Activated naive CD4-positive, alpha-beta T cell treated with anti-CD3 and anti-CD28 coated beads, Interleukin-2, amount 10 ng/mL, durations not matched to agents 7 days and 5 days (primary cell): ENCODE measurements at regions of chr7 and their contacts with region 1.

Region 1: GRCh38 chr7:93231799-93232672 is at the start of gene VPS50:
- DNase-seq: peak; percentile 95
- H3K4me3 Mint-ChIP-seq: peak within 1 kb of the TSS; percentile 95
- H3K27ac Mint-ChIP-seq: peak within 1 kb of the TSS; percentile 96
- H3K4me1 Mint-ChIP-seq: peaks cover 23% of the 10 kb centered on the region
- H3K27me3 Mint-ChIP-seq: no peaks in the 10 kb centered on the region

Region 2: GRCh38 chr7:93092757-93093370 is 139.2 kb before region 1 on chr7:
- CTCF ChIA-PET with region 1: interaction called, 20 read pairs
- DNase-seq: peak; percentile 26
- H3K4me3 Mint-ChIP-seq: no peak overlapping the region
- H3K27ac Mint-ChIP-seq: no peak overlapping the region
- H3K4me1 Mint-ChIP-seq: no peaks in the 10 kb centered on the region
- H3K27me3 Mint-ChIP-seq: peaks cover 11% of the 10 kb centered on the region

Region 3: DNA sequence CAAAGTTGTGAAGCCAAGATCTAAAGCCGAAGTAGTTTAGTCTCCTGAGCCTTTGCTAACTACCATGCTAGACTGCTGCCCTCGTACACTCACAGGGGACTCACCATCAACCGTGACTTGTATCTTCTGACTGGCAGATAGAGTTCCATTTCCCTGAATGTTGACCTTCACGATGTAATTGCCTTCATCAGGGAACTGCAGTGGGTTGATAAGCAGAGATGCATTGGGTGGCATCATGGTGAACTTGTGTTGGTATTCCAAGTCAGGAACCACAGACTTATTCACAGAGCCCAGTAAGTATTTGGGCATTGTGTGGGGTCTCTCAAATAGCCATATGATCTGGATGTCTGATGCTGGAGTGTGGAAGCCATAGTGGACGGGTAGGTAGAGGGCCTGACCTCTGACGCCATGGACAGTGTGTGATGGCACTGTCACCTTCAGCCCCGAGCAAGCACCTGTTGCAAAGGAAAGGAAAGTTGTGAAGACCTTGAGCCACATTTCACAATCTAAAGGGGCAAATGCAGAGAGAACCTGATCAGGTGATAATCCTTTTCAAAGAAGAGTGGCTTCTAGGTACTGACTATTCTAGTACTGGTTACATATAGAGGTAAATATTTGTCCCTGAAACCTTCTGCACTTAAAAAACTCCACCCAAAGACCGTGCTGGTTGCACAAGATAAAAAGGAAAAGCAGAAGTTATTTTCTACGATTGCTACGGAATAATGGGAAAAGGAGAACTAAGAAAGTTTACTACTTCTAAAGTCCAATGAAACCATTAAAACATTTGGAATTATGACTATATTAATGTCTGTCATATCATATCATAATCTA is 12.8 kb before region 1 on chr7:
- CTCF ChIA-PET with region 1: no interaction called
- DNase-seq: no peak
- H3K4me3 Mint-ChIP-seq: no peak overlapping the region
- H3K27ac Mint-ChIP-seq: no peak overlapping the region
- H3K4me1 Mint-ChIP-seq: no peaks in the 10 kb centered on the region
- H3K27me3 Mint-ChIP-seq: peaks cover 9% of the 10 kb centered on the region

Region 4: GRCh38 chr7:93245525-93246432 is 13.7 kb after region 1 on chr7:
- CTCF ChIA-PET with region 1: interaction called, 16 read pairs
- DNase-seq: no peak
- H3K4me3 Mint-ChIP-seq: no peak overlapping the region
- H3K27ac Mint-ChIP-seq: no peak overlapping the region
- H3K4me1 Mint-ChIP-seq: no peaks in the 10 kb centered on the region
- H3K27me3 Mint-ChIP-seq: no peaks in the 10 kb centered on the region

Region 5: GRCh38 chr7:93430917-93431588 is 199.0 kb after region 1 on chr7:
- CTCF ChIA-PET with region 1: no interaction called
- DNase-seq: no peak
- H3K4me3 Mint-ChIP-seq: no peak overlapping the region
- H3K27ac Mint-ChIP-seq: no peak overlapping the region
- H3K4me1 Mint-ChIP-seq: peaks cover 5% of the 10 kb centered on the region
- H3K27me3 Mint-ChIP-seq: no peaks in the 10 kb centered on the region